Mammary epithelial cell (primary cell): ENCODE measurements at regions of chr14 and their contacts with region 1.

Region 1: DNA sequence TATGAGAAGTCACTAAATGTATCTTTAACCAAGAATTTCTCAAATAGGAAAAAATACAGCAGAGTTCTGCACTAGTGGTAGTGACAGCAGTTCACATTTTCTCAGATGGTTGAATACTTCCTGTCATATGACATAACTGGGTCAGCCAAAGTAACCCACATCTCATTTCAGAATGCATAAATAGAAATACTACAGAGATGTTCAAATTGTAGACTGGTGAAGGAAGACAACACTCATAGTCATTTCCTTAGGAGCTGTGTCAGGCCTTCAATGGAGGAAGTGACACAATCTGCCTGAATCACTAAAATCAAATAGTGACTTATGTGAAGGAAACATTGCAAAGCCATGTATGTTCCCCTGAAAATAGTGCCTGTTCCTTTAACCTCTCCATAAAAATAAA is 32.4 kb downstream of the FERMT2 start:
- DNase-seq: peak; percentile 52
- H3K4me3 ChIP-seq: no peak overlapping the region
- H3K27ac ChIP-seq: peak overlapping the region; percentile 0
- H3K4me1 ChIP-seq: peaks cover 15% of the 10 kb centered on the region
- H3K27me3 ChIP-seq: no peaks in the 10 kb centered on the region
- CTCF ChIP-seq: no peak

Region 2: GRCh38 chr14:52950898-52951689 is 32.6 kb after region 1 on chr14 and contains the start of gene FERMT2:
- CTCF ChIA-PET with region 1: no interaction called
- dilution Hi-C with region 1: no loop called
- in situ Hi-C with region 1: no loop called
- intact Hi-C with region 1: loop called (anchors 5 kb)
- DNase-seq: peak; percentile 75
- H3K4me3 ChIP-seq: peak within 1 kb of the TSS; percentile 57 to 99 (median 67)
- H3K27ac ChIP-seq: peak within 1 kb of the TSS; percentile 70
- H3K4me1 ChIP-seq: peaks cover 21% of the 10 kb centered on the region
- H3K27me3 ChIP-seq: no peaks in the 10 kb centered on the region
- CTCF ChIP-seq: no peak
- total RNA-seq, gene FERMT2: 25.9 to 86.0 TPM